Left ventricle myocardium superior (tissue), 1 donor: ENCODE measurements at regions of chr9 and their contacts with region 1.

Region 1: DNA sequence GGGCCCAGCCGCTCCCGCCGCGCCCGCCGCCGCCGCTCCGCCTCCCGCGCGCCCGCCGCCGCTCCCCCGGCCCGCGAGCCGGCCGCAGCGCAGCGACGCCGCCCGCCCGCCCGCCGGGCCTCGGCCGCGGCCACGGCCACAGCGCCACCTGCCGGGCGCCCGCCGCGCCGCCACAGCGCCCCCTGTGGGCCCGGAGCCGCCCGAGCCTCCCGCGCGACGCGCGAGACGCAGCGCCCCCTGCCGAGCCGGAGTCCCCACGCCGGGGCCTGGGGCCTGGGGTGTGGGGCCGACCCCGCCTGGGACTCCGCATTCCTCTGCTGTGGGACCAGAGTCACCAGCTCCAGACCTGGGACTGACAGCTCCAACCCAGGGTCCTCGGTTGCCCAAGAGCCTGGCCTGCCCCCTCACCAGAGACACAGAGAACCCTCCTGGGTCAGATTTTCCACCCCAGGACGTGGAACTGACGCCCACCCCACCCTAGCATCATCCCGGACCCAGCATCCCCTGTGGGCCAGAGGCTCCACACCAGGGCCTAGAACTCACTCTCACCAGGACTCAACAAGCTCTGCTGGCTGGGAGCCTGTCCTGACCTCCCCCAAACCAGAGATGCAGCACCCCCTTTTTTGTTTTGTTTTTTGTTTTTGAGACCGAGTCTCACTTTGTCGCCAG is at the start of gene RAPGEF1:
- DNase-seq: peak; percentile 88
- ATAC-seq: peak; percentile 75
- total RNA-seq, gene RAPGEF1: 156 TPM

Region 2: GRCh38 chr9:130665431-130666392 is 1074.4 kb before region 1 on chr9:
- intact Hi-C with region 1: no loop called
- DNase-seq: no peak
- ATAC-seq: no peak

Region 3: DNA sequence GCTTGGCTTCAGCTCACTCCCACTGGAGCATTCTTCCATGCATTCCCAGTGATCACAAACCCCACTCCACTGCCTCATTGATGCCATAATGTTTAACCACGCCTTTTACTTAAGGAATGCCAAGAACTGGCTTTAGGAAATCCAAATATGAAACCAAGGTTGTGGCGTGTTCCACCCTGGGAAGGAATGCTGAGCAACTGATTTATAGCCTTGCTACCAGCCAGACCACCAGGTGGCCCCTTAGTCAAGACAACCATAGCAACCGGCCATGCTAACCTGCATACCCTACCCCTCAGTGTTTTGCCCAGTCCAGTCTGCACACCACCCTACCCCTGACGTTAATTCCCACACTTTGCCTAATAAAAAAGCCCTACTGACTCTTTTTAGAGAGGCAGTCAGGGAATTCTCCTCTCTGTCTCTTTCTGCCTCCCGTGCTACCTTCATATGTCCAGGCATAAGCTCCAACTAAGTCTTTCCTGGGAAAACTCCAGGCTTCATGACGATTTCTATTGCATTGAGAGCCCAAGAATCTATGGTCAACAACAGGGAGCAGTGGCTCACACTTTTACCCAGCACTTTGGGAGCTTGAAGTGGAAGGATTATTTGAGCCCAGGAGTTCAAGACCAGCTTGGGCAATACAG is 373.2 kb before region 1 on chr9:
- intact Hi-C with region 1: loop called (anchors 10 kb)
- DNase-seq: peak; percentile 57
- ATAC-seq: peak; percentile 85

Region 4: GRCh38 chr9:131590908-131591844 is 148.9 kb before region 1 on chr9:
- intact Hi-C with region 1: loop called (anchors 10 kb)
- DNase-seq: peak; percentile 91
- ATAC-seq: peak; percentile 93

Region 5: DNA sequence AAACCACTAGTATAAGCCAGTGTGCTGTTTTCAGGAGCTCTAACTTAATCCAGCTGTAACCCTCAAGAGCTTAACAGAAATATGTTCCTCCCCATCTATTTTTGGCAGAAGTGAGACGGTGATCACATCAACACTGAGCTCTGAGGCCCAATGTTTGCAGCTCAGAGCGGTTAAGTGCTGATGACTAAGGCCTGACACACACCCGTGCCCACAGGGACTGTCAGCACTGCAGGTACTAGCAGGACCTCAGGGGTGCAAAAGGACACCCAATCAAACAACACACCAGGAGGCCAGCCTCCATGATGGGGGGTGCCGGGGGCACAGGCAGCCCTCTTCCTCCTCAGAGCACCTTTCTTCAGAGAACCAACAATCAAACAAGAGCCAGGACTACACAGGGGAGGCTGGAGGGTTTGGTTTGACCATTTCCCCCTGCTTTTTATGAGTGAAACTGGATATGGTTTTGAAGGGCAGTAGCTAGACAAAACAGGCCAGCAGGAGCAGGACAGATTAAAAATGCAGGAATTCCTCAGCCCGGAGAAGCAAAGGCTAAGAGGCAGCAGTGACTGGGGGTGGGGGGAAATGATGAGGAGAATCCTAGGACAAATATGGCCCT is 61.5 kb before region 1 on chr9:
- intact Hi-C with region 1: loop called (anchors 10 kb)
- DNase-seq: peak; percentile 79
- ATAC-seq: peak; percentile 97

Region 6: GRCh38 chr9:131791542-131792254 is 51.6 kb after region 1 on chr9:
- intact Hi-C with region 1: no loop called
- DNase-seq: no peak
- ATAC-seq: no peak